ENCODE measurements at regions of chr4 and their contacts with region 1.

Region 1: GRCh38 chr4:2977211-2978088 is 14.1 kb downstream of the GRK4 start:
- H3K4me3 ChIP-seq: no peak overlapping the region
- H3K27ac ChIP-seq: no peak overlapping the region
- H3K4me1 ChIP-seq: no peaks in the 10 kb centered on the region
- CTCF ChIP-seq: no peak

Region 2: DNA sequence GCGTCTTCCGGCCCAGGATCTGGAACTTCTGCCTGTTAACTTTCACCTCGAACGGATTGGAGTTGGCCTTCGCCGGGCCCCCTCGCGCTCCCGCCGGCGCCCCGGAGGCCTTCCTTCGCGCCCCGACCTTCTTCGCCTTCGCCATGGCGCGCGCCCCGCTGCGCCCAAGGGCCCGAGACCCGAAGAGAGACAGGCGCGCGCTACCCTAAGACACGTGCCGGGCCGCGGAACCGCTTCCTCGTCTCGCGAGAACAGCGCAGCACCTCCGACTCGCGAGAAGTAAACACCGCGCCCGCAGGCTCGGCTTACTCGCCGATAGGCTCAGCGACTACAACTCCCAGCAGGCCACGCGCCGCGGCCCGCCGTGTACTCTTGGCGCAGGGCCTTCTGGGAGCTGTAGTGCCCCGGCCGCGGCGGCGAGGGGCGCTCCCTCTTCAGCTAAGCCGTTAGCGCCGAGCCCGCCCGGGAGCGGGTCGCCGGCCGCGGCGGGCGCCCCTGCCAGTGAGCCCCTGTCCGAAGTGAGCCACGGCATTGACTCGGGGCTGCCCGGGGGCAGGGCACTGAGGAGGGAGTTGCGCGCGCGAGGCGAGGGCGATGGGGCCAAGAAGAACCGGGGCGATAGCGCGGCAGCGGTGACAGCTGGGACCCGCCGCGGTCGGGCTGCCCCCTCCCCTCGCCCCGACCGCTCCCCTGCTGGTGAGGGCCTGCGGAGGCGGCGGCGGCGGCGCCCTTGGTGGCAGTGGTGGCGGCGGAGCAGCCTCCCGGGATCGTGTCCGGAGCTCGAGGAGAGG is 14.1 kb before region 1 on chr4 and contains the starts of genes GRK4 and NOP14:
- CTCF ChIA-PET with region 1: interaction called, 13 read pairs
- POLR2A ChIA-PET with region 1: interaction called, 15 read pairs
- H3K4me3 ChIP-seq: peak within 1 kb of the TSS; percentile 76
- H3K27ac ChIP-seq: peak within 1 kb of the TSS; percentile 80
- H3K4me1 ChIP-seq: no peaks in the 10 kb centered on the region
- CTCF ChIP-seq: peak; percentile 61

Region 3: GRCh38 chr4:2991243-2991642 is 13.8 kb after region 1 on chr4:
- CTCF ChIA-PET with region 1: interaction called, 17 read pairs
- POLR2A ChIA-PET with region 1: no interaction called
- H3K4me3 ChIP-seq: no peak overlapping the region
- H3K27ac ChIP-seq: no peak overlapping the region
- H3K4me1 ChIP-seq: no peaks in the 10 kb centered on the region
- CTCF ChIP-seq: no peak

Region 4: DNA sequence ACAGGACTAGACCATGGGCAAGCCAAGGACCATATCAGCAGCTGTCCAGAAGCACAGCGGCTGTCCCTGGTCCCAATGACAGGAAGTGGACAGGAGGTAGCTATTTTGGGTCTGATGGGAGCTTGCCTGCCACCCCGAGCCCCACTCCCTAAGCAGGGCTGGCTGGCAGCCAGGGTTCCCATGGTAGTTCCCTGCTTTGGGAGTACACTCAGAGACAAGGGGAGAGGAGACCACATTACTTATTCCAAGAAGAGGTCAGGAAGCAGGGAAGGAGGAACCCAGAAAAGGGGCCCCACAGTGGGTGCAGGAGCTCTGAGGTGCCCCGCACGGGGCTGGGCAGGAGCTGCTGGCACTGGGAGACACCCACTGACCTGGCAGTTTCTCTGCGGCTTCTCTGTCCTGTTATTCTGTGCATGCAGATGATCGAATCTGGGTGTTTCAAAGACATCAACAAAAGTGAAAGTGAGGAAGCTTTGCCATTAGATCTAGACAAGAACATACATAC is 60.6 kb after region 1 on chr4:
- CTCF ChIA-PET with region 1: interaction called, 12 read pairs
- POLR2A ChIA-PET with region 1: interaction called, 3 read pairs
- H3K4me3 ChIP-seq: no peak overlapping the region
- H3K27ac ChIP-seq: no peak overlapping the region
- H3K4me1 ChIP-seq: no peaks in the 10 kb centered on the region
- CTCF ChIP-seq: no peak